ENCODE measurements at regions of chr17 and their contacts with region 1.

Region 1: DNA sequence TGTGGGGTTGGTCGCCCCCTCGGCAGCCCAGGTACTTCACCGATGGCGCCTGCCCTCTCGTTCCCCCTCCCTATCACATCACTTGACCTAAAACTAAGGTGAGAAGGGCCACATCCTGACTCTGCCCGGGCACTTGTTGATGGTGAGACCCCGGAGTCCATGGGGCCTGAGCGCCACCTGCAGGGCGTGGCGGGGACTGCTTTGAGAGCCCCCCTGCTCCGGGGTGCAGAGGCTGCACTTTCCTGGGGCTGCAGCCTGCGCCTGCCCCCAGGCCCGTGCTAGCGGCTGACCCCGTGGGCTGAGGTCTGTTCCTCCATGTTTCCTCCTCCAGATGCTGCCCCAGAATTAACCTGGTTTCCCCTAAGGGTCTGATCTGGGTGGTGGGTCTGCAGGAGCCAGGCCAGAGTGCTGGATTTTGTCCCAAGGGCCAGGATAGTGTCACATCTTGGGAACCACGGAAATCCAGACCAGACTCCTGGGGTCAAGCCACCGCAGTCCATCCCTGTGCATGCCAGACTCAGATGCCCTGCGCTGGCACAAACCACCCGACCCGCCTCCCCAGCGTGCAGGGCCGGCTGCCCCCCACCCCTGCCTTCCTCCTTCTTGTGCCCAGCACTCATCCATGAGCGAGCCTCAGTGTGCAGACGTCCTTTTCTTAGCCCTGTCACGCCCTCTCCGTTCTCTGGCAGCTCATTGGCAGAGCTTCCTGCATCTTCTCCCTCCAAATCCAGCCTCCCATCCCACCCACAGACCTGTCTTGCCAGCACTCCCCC is 2.7 kb downstream of the NDUFAF8 start:
- DNase-seq: peak; percentile 33
- H3K4me3 ChIP-seq: no peak overlapping the region
- H3K27ac ChIP-seq: no peak overlapping the region
- H3K4me1 ChIP-seq: peaks cover 7% of the 10 kb centered on the region
- H3K27me3 ChIP-seq: no peaks in the 10 kb centered on the region
- CTCF ChIP-seq: peak; percentile 38 to 74 (median 56)
- POLR2A ChIP-seq: no peak

Region 2: GRCh38 chr17:80991645-80992076 is 250.2 kb before region 1 on chr17 and contains the start of gene CHMP6:
- intact Hi-C with region 1: loop called (anchors 10 kb)
- DNase-seq: peak; percentile 61
- H3K4me3 ChIP-seq: peak within 1 kb of the TSS; percentile 96 to 100
- H3K27ac ChIP-seq: peak within 1 kb of the TSS; percentile 45 to 69
- H3K4me1 ChIP-seq: peaks cover 12% of the 10 kb centered on the region
- H3K27me3 ChIP-seq: no peaks in the 10 kb centered on the region
- CTCF ChIP-seq: peak; percentile 14 to 77 (median 50)
- POLR2A ChIP-seq: no peak
- total RNA-seq, gene CHMP6: 30.6 to 35.3 TPM

Region 3: GRCh38 chr17:81142301-81143199 is 99.3 kb before region 1 on chr17:
- intact Hi-C with region 1: loop called (anchors 5 kb)
- DNase-seq: peak; percentile 66
- H3K4me3 ChIP-seq: no peak overlapping the region
- H3K27ac ChIP-seq: no peak overlapping the region
- H3K4me1 ChIP-seq: no peaks in the 10 kb centered on the region
- H3K27me3 ChIP-seq: no peaks in the 10 kb centered on the region
- CTCF ChIP-seq: peak; percentile 50 to 76 (median 71)
- POLR2A ChIP-seq: no peak

Measured in prostate gland (tissue), 2 donors.